ENCODE measurements at regions of chr22 and their contacts with region 1.

Region 1: DNA sequence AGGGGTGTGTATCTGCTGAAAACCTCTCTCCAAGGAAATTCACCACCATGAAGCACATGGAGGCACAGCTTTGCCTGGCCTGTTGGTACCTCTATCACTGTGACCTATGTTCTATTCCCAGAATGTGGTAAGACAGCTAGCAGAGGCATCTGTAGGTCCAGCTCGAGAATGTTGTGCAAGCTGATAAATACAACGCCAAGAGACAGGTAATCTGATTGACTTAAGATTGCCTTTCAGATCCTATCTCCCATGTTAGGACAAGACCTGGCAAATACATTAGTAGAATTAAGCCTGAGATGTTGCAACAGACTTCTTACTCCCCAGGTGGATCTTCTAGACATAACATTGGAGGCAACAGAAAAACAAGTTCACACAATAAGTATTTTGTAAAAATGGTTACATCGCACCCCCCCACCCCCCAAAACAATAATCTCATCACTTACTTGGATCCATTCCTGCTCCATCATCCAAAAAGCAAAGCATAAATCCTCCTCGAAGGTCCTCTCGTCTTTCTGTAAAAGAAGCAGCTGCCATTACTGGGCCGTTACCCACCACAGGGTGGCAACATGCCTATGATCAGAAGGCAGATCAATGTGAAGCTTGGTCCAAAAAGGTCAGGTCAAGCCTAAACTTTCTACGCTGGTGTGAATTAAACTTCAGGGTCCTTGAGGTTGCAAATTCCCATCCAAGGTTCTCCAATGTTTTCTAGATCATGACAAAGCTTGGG is 18.5 kb downstream of the MORC2 start:
- DNase-seq: no peak
- H3K4me3 Mint-ChIP-seq: no peak overlapping the region
- H3K27ac Mint-ChIP-seq: no peak overlapping the region
- H3K4me1 Mint-ChIP-seq: peaks cover 44% of the 10 kb centered on the region
- H3K27me3 Mint-ChIP-seq: no peaks in the 10 kb centered on the region

Region 2: DNA sequence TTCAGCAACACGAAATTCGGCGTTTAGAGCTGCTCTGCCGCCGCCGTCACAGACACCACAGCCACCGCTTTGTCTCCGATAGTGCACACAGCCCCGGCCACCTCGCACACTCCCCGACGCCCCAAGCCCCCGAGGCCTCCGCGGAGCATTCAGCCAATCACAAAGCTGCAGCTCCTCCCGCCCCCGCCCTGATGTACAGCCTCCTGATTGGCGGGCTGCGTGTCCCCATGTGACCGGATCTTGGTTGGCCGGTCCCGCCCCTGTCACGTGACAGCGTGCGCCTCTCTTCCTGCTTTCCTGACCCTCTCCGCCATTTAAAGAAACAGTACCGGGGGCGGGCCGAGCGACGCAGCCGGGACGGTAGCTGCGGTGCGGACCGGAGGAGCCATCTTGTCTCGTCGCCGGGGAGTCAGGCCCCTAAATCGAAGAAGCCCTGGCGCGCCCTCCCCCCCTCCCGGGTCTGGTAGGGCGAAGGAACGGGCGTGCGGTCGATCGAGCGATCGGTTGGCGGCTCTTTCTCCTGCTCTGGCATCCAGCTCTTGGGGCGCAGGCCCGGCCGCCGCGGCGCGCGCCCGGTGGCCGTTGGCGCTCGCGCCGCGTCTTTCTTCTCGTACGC is 18.9 kb after region 1 on chr22 and contains the start of gene TUG1:
- CTCF ChIA-PET with region 1: interaction called, 14 read pairs
- POLR2A ChIA-PET with region 1: no interaction called
- DNase-seq: peak; percentile 98
- H3K4me3 Mint-ChIP-seq: peak within 1 kb of the TSS; percentile 91
- H3K27ac Mint-ChIP-seq: peak within 1 kb of the TSS; percentile 98
- H3K4me1 Mint-ChIP-seq: peaks cover 64% of the 10 kb centered on the region
- H3K27me3 Mint-ChIP-seq: no peaks in the 10 kb centered on the region
- total RNA-seq, gene TUG1: 84.8 to 98.2 TPM